Gastrocnemius medialis (tissue), 4 donors: ENCODE measurements at regions of chr20 and their contacts with region 1.

Region 1: GRCh38 chr20:56826705-56827631 is 197.9 kb downstream of the TFAP2C start:
- DNase-seq: no peak
- ATAC-seq: peak; percentile 46 to 75
- H3K4me3 ChIP-seq: no peak overlapping the region
- H3K27ac ChIP-seq: no peak overlapping the region
- H3K4me1 ChIP-seq: no peaks in the 10 kb centered on the region
- H3K27me3 ChIP-seq: peaks cover 0 to 7% (median 3%) of the 10 kb centered on the region in 3 donors
- CTCF ChIP-seq: no peak
- POLR2A ChIP-seq: no peak

Region 2: GRCh38 chr20:56212091-56212490 is 614.9 kb before region 1 on chr20:
- in situ Hi-C with region 1: no loop called
- intact Hi-C with region 1: no loop called
- DNase-seq: no peak
- ATAC-seq: no peak
- H3K4me3 ChIP-seq: no peak overlapping the region
- H3K27ac ChIP-seq: no peak overlapping the region
- H3K4me1 ChIP-seq: no peaks in the 10 kb centered on the region
- H3K27me3 ChIP-seq: no peaks in the 10 kb centered on the region
- CTCF ChIP-seq: no peak
- POLR2A ChIP-seq: no peak

Region 3: DNA sequence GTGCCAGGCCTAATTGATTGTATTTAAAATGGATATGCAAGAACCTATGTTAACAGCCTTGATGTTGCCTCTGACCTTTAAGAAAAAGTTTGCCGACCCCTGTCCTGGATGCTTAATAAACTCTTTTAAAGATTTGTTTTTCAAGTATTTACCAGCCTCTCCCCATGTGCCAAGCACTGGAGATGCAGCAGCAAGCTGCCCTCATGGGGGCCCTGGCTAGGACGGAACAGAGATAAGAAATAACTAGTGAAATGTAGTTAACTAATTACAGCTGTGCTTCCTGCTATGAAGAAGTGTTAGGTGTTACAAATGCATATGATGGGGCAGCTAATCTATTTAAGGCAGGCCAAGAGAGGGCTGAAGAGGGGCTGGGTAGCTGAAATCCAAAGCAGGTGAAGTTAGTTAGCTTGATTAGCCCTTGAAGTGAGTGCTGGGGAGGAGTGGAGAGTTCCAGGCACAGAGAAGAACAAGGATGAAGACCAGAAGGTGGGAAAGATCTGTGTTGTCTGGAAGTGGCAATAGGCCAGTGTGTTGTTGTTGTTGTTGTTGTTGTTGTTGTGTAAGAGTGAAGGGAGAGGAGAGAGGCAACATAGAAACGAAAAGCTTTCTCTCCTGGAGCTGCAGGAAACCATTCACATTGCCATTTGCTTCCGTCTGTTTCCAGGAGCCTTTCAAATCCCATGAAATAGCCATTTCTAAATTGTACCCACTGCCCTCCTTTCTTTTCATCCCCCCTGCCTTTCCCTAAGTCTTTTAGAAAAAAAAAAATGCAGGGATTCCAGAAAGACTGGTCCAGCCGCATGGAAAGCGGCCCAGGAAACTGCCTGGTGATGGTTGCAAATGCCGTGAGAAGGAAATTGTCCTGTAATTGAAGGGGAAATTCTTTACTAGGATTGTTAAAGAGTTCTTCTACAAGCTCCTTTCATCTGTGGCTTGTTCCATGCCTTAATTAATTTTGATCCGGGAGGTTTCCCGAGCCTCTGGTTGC is 78.3 kb before region 1 on chr20:
- in situ Hi-C with region 1: loop called in 1 of 4 experiments (anchors 25 kb)
- intact Hi-C with region 1: no loop called
- DNase-seq: no peak
- ATAC-seq: no peak
- H3K4me3 ChIP-seq: no peak overlapping the region
- H3K27ac ChIP-seq: no peak overlapping the region
- H3K4me1 ChIP-seq: no peaks in the 10 kb centered on the region
- H3K27me3 ChIP-seq: peaks cover 5 to 13% (median 8%) of the 10 kb centered on the region in 3 donors
- CTCF ChIP-seq: no peak
- POLR2A ChIP-seq: no peak

Region 4: DNA sequence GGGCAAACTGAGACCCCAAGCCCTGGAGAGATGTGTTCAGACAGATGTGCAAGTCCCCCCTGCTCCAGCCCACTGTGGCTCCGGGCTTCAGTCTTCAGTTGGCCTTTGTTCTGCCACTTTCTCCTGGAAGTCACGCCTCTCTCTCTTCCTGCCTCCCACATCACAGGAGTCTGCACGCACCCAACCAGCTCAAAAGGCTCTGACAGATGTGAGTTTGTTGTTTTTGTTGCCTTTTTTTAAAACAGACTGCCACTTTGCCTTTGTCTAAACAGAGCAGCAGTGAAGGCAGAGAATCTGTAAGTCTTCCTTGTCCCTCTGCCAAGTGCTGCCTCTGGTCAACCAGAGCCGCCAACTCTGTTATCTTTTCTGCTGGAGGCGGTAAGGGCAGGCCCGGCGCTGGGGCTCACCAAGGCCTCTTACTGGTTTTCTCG is 48.2 kb before region 1 on chr20:
- in situ Hi-C with region 1: no loop called
- intact Hi-C with region 1: no loop called
- DNase-seq: no peak
- ATAC-seq: no peak
- H3K4me3 ChIP-seq: no peak overlapping the region
- H3K27ac ChIP-seq: no peak overlapping the region
- H3K4me1 ChIP-seq: no peaks in the 10 kb centered on the region
- H3K27me3 ChIP-seq: peaks cover 0 to 6% (median 0%) of the 10 kb centered on the region in 3 donors
- CTCF ChIP-seq: no peak
- POLR2A ChIP-seq: no peak